Activated B cell treated with CpG ODN at 0.5 μM for 24 hours (primary cell): ENCODE measurements at regions of chr6 and their contacts with region 1.

Region 1: DNA sequence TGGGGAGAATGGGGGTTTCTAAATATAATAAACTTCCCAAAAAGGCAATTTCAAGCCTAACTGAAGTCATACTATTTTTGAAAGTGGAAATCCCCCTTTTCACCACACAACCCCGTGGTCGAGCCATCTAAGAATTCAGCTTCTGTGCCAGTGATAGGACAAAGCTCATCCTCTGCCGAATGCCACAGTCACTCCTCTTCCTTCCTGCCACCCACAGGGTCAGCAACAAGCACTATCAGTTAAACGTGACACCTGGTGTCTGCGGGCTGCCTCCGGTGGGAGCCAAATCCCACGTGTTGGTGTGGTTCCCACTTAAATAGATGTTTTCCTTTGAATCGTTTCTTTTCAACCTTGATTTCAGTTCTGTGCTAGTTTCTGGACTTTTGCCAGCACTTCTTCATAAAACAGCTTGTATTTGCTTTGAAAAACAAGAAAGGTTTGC is 60.7 kb downstream of the TNFAIP3 start:
- DNase-seq: peak; percentile 51
- ATAC-seq: peak; percentile 95
- H3K4me3 Mint-ChIP-seq: peak overlapping the region; percentile 48
- H3K27ac Mint-ChIP-seq: peak overlapping the region; percentile 85
- H3K4me1 Mint-ChIP-seq: peaks cover 57% of the 10 kb centered on the region
- H3K27me3 Mint-ChIP-seq: no peaks in the 10 kb centered on the region
- CTCF ChIP-seq: no peak

Region 2: DNA sequence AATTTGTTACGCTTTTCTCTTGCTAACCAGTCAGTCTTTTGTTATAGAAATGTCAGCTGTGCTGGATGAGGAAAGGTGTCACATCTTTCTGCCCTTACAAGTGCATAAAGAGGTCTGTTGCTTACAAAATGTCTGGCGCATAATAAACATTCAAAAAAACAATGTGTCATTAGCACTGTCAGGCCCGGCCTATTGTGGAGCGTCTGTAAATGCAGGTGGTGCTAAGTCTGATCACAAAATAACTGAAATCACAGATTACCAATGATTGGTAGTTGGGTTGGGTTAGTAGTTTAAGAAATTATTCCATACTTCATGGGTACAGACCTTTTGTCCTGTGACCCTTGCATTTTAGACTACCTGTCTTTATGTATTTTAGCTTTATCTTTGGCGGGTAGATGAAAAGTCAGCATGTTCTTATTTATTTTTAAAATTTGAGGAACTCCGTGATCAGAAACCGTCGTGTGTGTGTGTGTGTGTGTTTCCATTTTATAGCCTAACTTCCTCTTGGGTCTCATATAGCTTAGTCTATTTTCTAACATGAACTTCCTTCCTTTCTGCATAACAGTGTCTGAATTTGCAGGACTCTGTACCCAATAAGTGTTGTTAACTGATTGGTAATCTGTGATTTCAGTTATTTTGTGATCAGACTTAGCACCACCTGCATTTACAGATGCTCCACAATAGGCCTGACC is 620.5 kb before region 1 on chr6:
- CTCF ChIA-PET with region 1: no interaction called
- POLR2A ChIA-PET with region 1: no interaction called
- intact Hi-C with region 1: loop called (anchors 1 kb)
- DNase-seq: no peak
- ATAC-seq: peak; percentile 79
- H3K4me3 Mint-ChIP-seq: peak overlapping the region; percentile 62
- H3K27ac Mint-ChIP-seq: peak overlapping the region; percentile 77
- H3K4me1 Mint-ChIP-seq: peaks cover 47% of the 10 kb centered on the region
- H3K27me3 Mint-ChIP-seq: no peaks in the 10 kb centered on the region
- CTCF ChIP-seq: no peak

Region 3: GRCh38 chr6:137811121-137811915 is 116.5 kb before region 1 on chr6:
- CTCF ChIA-PET with region 1: no interaction called
- POLR2A ChIA-PET with region 1: interaction called, 3 read pairs
- intact Hi-C with region 1: loop called (anchors 5 kb)
- DNase-seq: peak; percentile 53
- ATAC-seq: peak; percentile 99
- H3K4me3 Mint-ChIP-seq: peak overlapping the region; percentile 69
- H3K27ac Mint-ChIP-seq: peak overlapping the region; percentile 95
- H3K4me1 Mint-ChIP-seq: peaks cover 41% of the 10 kb centered on the region
- H3K27me3 Mint-ChIP-seq: no peaks in the 10 kb centered on the region
- CTCF ChIP-seq: no peak

Region 4: GRCh38 chr6:137873273-137873762 is 54.5 kb before region 1 on chr6:
- CTCF ChIA-PET with region 1: interaction called, 16 read pairs
- POLR2A ChIA-PET with region 1: interaction called, 36 read pairs
- intact Hi-C with region 1: loop called (anchors 1 kb)
- DNase-seq: peak; percentile 50
- ATAC-seq: peak; percentile 84
- H3K4me3 Mint-ChIP-seq: peak overlapping the region; percentile 96
- H3K27ac Mint-ChIP-seq: peak overlapping the region; percentile 94
- H3K4me1 Mint-ChIP-seq: peaks cover 80% of the 10 kb centered on the region
- H3K27me3 Mint-ChIP-seq: no peaks in the 10 kb centered on the region
- CTCF ChIP-seq: no peak

Region 5: DNA sequence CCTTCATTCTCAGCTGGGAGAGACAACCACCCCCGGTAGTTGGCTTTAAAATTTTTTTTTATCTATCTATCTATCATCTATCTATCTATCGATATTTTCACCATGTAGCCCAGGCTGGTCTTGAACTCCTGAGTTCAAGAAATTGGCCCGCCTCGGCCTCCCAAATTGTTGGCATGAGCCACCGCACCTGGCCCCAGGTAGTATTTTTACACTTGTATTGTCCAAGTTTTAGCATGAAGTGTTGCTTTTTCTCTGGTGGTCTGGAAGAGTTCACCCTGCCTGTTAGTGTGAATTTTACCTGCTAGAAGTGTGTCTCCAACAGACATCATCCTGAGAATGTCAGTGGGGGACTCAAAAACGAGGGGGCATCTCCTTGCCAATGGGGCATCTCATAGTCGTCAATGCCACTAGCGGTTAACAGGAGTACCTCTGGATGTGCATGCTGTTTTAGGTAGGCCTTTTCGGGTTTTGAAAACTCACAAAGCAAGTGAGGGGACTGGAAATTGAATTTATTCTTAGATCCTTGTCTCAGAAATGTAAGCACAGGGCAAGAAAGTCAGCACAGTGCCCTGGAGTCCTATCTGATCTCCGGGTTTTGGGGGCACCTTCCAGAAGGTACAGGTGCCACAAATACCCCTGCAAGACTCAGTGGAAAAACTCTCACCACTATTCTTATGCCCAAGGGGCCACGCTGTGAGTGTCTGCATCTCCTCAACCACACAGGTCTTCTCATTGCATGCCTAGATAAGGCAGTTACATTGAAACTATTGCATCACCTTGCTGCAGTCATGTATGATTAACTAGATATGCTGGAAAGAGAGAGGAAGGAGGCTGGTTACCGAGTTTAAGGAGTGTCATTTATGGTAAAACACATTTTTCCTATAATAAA is 23.6 kb before region 1 on chr6:
- CTCF ChIA-PET with region 1: no interaction called
- POLR2A ChIA-PET with region 1: interaction called, 7 read pairs
- intact Hi-C with region 1: loop called (anchors 1 kb)
- DNase-seq: no peak
- ATAC-seq: peak; percentile 84
- H3K4me3 Mint-ChIP-seq: peak overlapping the region; percentile 59
- H3K27ac Mint-ChIP-seq: peak overlapping the region; percentile 79
- H3K4me1 Mint-ChIP-seq: peaks cover 43% of the 10 kb centered on the region
- H3K27me3 Mint-ChIP-seq: no peaks in the 10 kb centered on the region
- CTCF ChIP-seq: no peak

Region 6: DNA sequence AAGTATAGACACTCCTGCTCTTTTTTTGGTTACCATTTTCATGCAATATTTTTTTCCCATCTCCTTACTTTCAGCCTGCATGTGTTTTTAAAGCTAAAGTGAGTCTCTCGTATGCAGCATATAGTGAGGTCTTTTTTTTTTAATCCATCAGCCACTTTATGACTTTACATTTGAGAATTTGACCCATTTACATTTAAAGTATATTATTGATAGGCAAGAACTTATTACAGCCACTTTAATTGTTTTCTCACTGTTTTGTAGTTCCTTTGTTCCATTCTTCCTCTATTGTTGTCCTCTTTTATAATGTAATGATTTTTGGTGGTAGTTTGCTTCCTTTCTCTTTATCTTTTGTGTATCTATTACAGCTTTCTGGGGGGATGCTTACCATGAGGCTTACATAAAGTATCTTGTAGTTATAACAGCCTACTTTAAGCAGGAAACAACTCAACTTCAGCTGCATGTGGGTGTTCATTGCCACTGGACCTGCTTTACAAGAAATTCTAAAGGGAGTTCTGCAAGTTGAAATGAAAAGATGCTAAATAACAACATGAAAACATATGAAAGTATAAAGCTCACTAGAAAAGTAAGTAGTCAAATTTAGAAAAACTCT is 11.1 kb after region 1 on chr6:
- CTCF ChIA-PET with region 1: interaction called, 9 read pairs
- POLR2A ChIA-PET with region 1: interaction called, 25 read pairs
- intact Hi-C with region 1: loop called (anchors 1 kb)
- DNase-seq: no peak
- ATAC-seq: no peak
- H3K4me3 Mint-ChIP-seq: no peak overlapping the region
- H3K27ac Mint-ChIP-seq: no peak overlapping the region
- H3K4me1 Mint-ChIP-seq: peaks cover 18% of the 10 kb centered on the region
- H3K27me3 Mint-ChIP-seq: no peaks in the 10 kb centered on the region
- CTCF ChIP-seq: no peak